Activated CD8-positive, alpha-beta T cell treated with anti-CD3 and anti-CD28 coated beads for 36 hours (primary cell): ENCODE measurements at regions of chr9 and their contacts with region 1.

Region 1: DNA sequence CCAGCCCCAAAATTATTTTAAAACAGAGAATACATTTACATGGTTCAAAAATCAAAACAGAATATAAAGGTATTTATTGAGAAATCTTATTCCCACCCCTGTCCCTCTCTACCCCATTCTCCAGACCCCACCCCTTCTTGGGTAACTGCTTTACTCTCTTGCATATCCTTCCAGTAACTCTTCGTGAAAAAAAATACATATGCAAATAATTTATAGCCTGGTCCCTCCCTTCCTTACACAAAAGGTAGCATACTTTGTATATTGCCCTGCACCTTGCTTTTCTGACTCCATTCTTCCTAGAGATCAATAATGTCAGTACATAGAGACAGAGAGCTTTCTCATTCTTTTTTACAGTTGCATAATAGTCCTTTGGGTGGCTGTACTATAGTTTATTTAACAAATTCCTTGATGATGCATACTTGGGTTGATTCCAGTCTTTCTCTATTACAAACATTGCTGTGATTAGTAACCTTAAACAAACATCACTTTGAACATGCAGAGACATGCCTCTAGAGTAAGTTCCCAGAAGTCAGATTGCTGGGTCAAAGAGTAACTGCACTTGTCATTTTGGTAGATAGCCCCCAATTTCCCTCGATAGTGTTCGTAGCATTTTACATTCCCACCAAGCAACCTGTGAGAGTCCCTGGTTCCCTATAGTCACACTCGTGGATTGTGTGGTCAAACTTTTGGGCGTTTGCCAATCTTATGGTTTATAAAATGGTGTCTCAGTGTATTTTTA is 47.8 kb downstream of the STOM start:
- DNase-seq: no peak
- ATAC-seq: peak; percentile 18
- H3K4me3 Mint-ChIP-seq: no peak overlapping the region
- H3K27ac Mint-ChIP-seq: no peak overlapping the region
- H3K4me1 Mint-ChIP-seq: peaks cover 14% of the 10 kb centered on the region
- H3K27me3 Mint-ChIP-seq: no peaks in the 10 kb centered on the region
- CTCF ChIP-seq: no peak

Region 2: DNA sequence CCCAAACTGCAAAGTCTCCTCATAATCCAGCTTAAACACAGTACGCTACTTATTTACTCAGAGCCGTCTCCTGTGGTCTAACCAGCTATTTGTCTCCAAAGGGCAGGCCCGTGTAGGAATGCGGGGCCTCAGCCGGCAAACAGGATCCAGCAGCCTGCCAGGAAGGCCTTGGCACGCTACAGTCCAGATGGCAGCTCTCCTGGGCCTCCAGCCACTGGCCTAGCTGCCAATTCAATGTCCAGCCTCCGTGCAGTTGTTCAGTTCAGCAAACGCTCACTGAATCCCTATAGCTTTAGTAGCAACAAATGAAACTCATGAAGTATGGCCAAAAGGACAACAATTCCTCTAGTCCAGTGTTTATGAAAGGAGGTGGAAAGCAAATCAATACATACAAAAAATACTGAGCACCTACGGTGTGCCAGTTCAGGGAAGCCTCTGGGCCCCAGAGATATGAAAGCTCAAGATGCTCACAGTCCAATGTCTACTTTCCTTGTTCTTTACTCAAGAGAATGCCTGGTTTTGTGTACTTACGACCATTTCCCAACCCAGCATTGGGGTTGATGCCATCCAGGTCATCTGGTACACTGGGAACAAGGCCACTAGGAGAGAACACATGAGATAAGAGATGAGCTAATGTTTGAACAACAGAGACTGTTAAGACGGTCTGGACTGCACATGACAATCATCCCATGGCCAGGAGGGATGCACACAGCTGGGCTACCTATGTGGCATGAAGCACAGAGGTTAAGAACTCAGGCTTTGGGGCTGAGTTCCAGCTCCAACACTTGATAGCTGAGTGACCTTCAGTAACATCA is 750.6 kb before region 1 on chr9:
- CTCF ChIA-PET with region 1: no interaction called
- POLR2A ChIA-PET with region 1: no interaction called
- intact Hi-C with region 1: no loop called
- DNase-seq: no peak
- ATAC-seq: no peak
- H3K4me3 Mint-ChIP-seq: no peak overlapping the region
- H3K27ac Mint-ChIP-seq: no peak overlapping the region
- H3K4me1 Mint-ChIP-seq: peaks cover 20% of the 10 kb centered on the region
- H3K27me3 Mint-ChIP-seq: no peaks in the 10 kb centered on the region
- CTCF ChIP-seq: no peak

Region 3: GRCh38 chr9:121305269-121305994 is 16.8 kb before region 1 on chr9:
- CTCF ChIA-PET with region 1: interaction called, 38 read pairs
- POLR2A ChIA-PET with region 1: no interaction called
- intact Hi-C with region 1: no loop called
- DNase-seq: no peak
- ATAC-seq: no peak
- H3K4me3 Mint-ChIP-seq: no peak overlapping the region
- H3K27ac Mint-ChIP-seq: no peak overlapping the region
- H3K4me1 Mint-ChIP-seq: peaks cover 2% of the 10 kb centered on the region
- H3K27me3 Mint-ChIP-seq: peaks cover 2% of the 10 kb centered on the region
- CTCF ChIP-seq: no peak

Region 4: DNA sequence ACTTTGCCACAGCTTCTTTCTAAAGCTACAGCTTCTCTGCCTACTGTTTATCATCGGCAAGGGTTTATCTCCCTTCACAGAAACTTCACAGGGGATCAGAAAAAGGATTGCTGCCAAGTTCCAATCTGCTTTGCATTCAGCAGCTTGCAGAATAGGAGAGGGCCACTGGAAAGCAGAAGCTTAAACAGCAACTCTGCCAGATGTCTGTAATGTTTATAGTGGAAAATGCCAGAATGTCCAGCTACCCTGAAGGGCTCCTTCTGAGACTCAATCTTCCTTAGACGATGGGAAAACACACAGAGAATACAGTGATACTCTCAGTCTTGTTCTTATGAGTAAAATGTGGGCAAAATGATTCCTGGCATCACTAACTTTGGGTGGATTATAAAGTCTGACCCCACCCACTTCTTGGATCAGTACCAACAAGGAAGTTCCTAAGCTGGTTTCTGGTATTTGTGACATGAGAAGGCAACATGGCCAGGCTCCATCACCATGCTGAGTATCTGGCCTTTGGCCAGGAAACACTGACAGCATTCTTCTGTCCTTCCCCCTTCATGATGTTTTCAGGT is 28.9 kb after region 1 on chr9:
- CTCF ChIA-PET with region 1: interaction called, 21 read pairs
- POLR2A ChIA-PET with region 1: interaction called, 4 read pairs
- intact Hi-C with region 1: no loop called
- DNase-seq: no peak
- ATAC-seq: no peak
- H3K4me3 Mint-ChIP-seq: no peak overlapping the region
- H3K27ac Mint-ChIP-seq: no peak overlapping the region
- H3K4me1 Mint-ChIP-seq: peaks cover 38% of the 10 kb centered on the region
- H3K27me3 Mint-ChIP-seq: no peaks in the 10 kb centered on the region
- CTCF ChIP-seq: no peak

Region 5: GRCh38 chr9:121376214-121376830 is 54.1 kb after region 1 on chr9:
- CTCF ChIA-PET with region 1: interaction called, 142 read pairs
- POLR2A ChIA-PET with region 1: no interaction called
- intact Hi-C with region 1: no loop called
- DNase-seq: no peak
- ATAC-seq: no peak
- H3K4me3 Mint-ChIP-seq: no peak overlapping the region
- H3K27ac Mint-ChIP-seq: no peak overlapping the region
- H3K4me1 Mint-ChIP-seq: peaks cover 19% of the 10 kb centered on the region
- H3K27me3 Mint-ChIP-seq: peaks cover 3% of the 10 kb centered on the region
- CTCF ChIP-seq: peak; percentile 35

Region 6: DNA sequence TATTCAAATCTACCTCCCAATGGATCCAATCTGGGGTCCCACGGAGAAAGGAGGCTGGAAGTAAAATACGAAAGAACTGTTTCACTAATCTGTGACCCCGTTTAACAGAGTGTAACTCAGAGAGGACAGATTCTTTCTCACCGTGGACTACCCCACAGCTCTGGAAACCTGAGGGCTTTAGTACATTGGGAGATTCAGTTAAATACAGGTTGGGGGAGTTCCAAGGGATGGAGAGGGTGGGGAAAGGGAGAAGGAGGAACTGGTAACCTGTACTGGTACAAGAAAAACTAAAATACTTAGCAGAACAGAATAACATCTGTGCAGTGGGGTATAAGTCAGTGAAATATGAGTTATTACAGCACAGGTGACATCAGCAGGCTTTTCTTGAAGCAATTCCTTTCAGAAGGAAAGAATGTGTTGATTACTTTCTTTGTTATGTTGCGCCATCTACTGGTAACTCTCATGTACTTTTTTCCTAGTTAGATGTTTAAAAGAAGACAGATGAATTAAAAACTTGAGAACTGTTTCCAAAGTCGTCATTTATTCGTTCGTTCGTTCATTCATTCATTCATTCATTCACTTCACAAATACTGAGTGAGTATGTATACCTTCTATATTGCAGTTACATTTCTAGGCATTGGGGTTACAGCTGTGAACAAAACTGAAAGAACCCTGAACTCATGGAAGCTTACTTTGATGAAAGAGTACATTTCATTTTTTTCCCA is 77.8 kb after region 1 on chr9:
- CTCF ChIA-PET with region 1: interaction called, 378 read pairs
- POLR2A ChIA-PET with region 1: interaction called, 6 read pairs
- intact Hi-C with region 1: loop called (anchors 1 kb)
- DNase-seq: no peak
- ATAC-seq: peak; percentile 56
- H3K4me3 Mint-ChIP-seq: no peak overlapping the region
- H3K27ac Mint-ChIP-seq: no peak overlapping the region
- H3K4me1 Mint-ChIP-seq: peaks cover 2% of the 10 kb centered on the region
- H3K27me3 Mint-ChIP-seq: no peaks in the 10 kb centered on the region
- CTCF ChIP-seq: peak; percentile 76

Region 7: DNA sequence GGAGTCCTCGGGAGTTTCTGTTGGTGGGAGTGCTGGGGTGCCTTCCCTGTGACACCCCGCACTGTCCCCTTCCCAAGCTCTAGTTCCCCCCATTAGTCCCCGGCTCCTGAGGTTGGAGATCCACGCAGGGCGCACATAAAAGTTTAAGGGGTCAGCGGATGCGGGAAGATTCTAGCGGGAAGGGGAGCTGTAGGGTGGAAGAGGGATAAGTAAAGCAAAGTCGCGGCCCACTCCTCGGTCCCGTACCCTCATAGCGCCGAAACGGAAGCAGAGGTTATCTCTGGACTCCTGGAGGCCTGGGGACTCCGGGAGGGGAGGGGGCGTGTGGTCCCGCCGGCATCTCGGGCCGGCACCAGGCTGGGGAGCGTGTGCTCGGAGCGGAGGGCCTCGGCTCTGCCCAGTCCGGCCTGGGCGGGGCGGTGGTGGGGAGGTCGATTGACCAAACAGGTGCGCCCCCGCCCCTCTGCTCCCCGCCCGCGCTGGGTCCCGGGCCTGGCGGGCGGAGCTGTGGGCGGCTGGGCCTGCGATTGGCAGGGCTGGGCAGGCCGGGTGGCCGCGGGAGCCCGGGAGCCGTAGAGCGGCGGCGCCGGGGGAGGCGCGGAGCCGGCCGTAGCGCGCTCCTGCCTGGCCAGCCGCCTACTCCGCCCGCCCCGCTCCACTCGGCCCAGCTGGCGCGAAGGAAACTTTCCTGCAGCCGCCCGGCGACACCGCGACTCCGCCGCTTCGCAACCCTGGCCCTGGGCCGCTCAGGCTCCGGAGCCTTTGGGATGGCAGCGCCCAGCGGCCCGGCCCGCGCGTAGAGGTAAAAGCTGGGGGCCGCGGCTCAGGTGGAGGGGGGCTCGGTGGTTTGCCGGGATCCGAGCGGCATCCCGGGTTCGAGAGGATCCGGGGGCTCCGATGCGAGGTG is 277.0 kb after region 1 on chr9:
- CTCF ChIA-PET with region 1: no interaction called
- POLR2A ChIA-PET with region 1: no interaction called
- intact Hi-C with region 1: no loop called
- DNase-seq: no peak
- ATAC-seq: no peak
- H3K4me3 Mint-ChIP-seq: no peak overlapping the region
- H3K27ac Mint-ChIP-seq: no peak overlapping the region
- H3K4me1 Mint-ChIP-seq: peaks cover 2% of the 10 kb centered on the region
- H3K27me3 Mint-ChIP-seq: peaks cover 51% of the 10 kb centered on the region
- CTCF ChIP-seq: no peak